ENCODE measurements at regions of chr19 and their contacts with region 1.

Region 1: GRCh38 chr19:49680398-49681351 is 3.6 kb downstream of the PRMT1 start:
- DNase-seq: peak; percentile 91
- ATAC-seq: peak; percentile 2 to 9

Region 2: DNA sequence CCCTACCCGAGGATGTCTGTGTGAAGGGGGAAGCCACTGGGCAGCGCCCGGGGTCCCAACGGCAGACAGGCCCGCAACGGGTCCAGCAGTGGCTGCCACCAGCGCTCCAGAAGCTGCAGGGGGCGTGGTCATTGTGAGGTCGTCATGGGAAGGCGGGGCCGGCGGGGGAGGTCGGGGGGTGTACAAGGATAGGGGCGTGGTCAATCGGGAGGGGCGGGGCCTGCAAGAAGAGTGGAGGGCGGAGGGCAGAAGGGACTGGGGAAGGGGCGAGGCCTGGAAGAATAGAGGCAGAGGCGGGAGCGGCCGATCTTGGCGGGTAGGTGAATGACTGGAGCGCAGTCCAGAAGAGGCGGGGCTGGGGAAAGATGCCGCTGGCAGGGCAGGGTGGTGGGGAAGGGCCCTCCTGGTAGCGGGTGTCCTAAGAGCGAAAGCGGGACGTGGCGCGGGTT is 128.1 kb after region 1 on chr19:
- intact Hi-C with region 1: loop called (anchors 5 to 10 kb)
- DNase-seq: peak; percentile 96
- ATAC-seq: peak; percentile 73 to 79